ENCODE measurements at regions of chr7 and their contacts with region 1.

Region 1: GRCh38 chr7:8319115-8319908 is 57.3 kb upstream of the ICA1 start:
- DNase-seq: no peak

Region 2: GRCh38 chr7:8295638-8296361 is 23.5 kb before region 1 on chr7:
- intact Hi-C with region 1: no loop called
- DNase-seq: no peak

Region 3: DNA sequence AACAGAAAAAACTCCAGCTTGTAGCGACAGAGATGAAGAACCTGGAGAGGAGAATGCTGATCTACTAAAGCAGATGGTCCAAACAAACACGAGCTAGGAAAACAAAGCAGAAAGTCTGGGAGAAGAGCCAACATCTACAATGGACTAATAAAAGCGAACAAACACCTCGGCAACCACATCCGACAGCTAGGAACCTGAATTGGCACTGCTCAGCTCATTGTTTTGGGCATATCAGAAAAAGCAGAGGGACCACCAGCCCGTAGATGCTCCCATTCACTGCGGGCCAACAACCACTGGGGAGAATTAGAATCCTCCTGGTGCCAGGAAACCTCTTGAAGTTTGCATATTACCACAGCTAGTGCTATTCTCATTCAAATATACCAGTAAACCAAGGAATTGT is 318.8 kb after region 1 on chr7:
- intact Hi-C with region 1: no loop called
- DNase-seq: no peak

Region 4: GRCh38 chr7:9557853-9558252 is 1238.5 kb after region 1 on chr7:
- intact Hi-C with region 1: loop called in 1 of 2 experiments (anchors 5 kb)
- DNase-seq: no peak